Activated CD4-positive, alpha-beta T cell treated with anti-CD3 and anti-CD28 coated beads for 36 hours (primary cell): ENCODE measurements at regions of chr18 and their contacts with region 1.

Region 1: GRCh38 chr18:63683152-63683551 is 19.6 kb upstream of the SERPINB11 start:
- DNase-seq: no peak
- ATAC-seq: no peak
- H3K4me3 Mint-ChIP-seq: no peak overlapping the region
- H3K27ac Mint-ChIP-seq: no peak overlapping the region
- H3K4me1 Mint-ChIP-seq: no peaks in the 10 kb centered on the region
- H3K27me3 Mint-ChIP-seq: peaks cover 9% of the 10 kb centered on the region

Region 2: GRCh38 chr18:63523660-63524059 is 159.5 kb before region 1 on chr18:
- CTCF ChIA-PET with region 1: no interaction called
- POLR2A ChIA-PET with region 1: no interaction called
- intact Hi-C with region 1: loop called in 1 of 2 experiments (anchors 10 kb)
- DNase-seq: no peak
- ATAC-seq: no peak
- H3K4me3 Mint-ChIP-seq: no peak overlapping the region
- H3K27ac Mint-ChIP-seq: no peak overlapping the region
- H3K4me1 Mint-ChIP-seq: no peaks in the 10 kb centered on the region
- H3K27me3 Mint-ChIP-seq: peaks cover 10% of the 10 kb centered on the region